Activated CD4-positive, alpha-beta T cell treated with anti-CD3 and anti-CD28 coated beads for 36 hours (primary cell): ENCODE measurements at regions of chr16 and their contacts with region 1.

Region 1: GRCh38 chr16:30472328-30472942 is at the start of gene ITGAL:
- DNase-seq: peak; percentile 93
- ATAC-seq: peak; percentile 62
- H3K4me3 Mint-ChIP-seq: peak within 1 kb of the TSS; percentile 95
- H3K27ac Mint-ChIP-seq: peak within 1 kb of the TSS; percentile 99
- H3K4me1 Mint-ChIP-seq: peaks cover 63% of the 10 kb centered on the region
- H3K27me3 Mint-ChIP-seq: no peaks in the 10 kb centered on the region
- total RNA-seq, gene ITGAL: 210 to 222 TPM

Region 2: DNA sequence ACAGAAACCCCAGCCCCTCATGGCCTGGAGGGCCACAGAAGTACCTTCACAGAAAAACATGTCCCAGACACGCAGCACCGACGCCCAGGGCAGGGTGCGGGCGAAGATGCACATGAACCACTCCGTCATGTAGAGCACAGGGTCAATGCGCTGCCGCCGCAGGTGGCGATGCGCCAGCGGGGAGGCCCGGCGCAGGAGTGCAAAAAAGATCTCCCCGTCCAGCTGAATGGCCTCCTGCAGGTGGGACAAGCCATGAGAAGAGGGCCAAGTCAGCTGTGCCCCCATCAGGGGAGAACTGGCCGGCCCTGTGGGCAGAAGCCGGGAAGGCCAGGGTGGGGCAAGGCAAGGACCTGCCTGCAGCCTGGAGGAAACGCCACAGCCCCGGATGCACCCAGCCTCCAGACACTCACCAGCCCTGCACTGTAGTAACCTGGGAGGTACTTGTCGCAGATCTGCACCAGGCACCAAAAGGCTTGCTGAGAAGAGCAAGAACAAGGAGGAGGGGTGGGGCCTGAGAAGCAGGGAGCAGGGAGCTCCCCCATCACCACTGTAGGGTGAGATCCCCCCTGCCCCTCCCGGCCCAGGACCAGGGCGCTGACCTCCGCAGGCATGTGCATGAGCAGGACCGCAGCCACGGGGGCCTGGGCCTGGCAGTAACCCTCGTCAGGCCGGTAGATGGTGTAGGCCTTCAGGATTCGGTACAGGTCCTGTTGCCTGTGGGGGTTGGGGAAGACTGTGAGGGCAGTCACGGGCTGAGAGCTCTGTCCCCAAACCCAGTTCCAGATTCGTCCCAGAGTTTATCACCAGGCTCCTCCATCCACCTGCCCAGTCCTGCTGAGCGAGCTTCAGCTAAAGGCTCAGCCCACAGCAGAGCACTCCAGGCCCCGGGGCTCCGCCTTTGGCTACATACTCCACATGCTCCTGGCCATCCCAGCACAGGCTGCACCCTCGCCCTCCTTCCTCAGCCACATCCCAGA is 113.0 kb before region 1 on chr16:
- CTCF ChIA-PET with region 1: no interaction called
- POLR2A ChIA-PET with region 1: no interaction called
- intact Hi-C with region 1: no loop called
- DNase-seq: no peak
- ATAC-seq: no peak
- H3K4me3 Mint-ChIP-seq: no peak overlapping the region
- H3K27ac Mint-ChIP-seq: no peak overlapping the region
- H3K4me1 Mint-ChIP-seq: peaks cover 9% of the 10 kb centered on the region
- H3K27me3 Mint-ChIP-seq: no peaks in the 10 kb centered on the region

Region 3: DNA sequence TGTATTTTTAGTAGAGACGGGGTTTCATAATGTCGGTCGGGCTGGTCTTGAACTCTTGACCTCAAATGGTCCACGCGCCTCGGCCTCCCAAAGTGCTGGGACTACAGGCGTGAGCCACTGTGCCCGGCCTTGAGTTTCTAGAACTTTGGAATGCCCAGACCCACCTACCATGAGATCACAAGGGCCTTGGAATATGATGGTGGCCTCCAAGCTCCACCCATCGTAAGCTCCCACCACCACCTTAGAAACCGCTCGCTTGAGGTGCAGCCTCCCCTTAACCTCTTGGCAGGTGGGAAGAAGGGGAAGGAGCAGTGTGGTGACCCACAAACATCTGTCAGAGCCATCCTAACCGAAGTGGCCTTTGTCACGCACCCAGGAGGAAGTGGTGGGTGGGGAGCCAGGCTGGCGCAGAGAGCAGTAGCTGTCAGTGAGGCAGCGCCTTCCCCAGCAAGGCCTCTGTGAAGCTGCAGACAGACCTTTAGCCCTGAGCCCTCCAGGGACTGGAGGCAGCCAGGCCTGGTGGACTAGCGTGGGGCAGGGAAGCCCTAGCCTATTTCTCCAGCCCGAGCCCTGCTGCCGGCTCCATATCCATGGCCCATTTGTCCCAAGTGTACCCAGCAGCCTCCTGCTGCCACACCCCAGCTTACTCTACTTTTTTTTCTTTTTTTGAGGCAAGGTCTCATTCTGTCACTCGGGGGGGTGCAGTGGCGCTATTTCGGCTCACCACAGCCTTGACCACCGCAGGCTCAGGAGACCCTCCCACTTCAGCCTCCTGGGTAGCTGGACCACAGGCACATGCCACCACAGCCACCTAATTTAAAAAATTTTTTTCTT is 13.7 kb before region 1 on chr16:
- CTCF ChIA-PET with region 1: interaction called, 25 read pairs
- POLR2A ChIA-PET with region 1: interaction called, 9 read pairs
- intact Hi-C with region 1: loop called (anchors 1 kb)
- DNase-seq: peak; percentile 94
- ATAC-seq: peak; percentile 96
- H3K4me3 Mint-ChIP-seq: peak overlapping the region; percentile 57
- H3K27ac Mint-ChIP-seq: peak overlapping the region; percentile 95
- H3K4me1 Mint-ChIP-seq: peaks cover 59% of the 10 kb centered on the region
- H3K27me3 Mint-ChIP-seq: no peaks in the 10 kb centered on the region

Region 4: DNA sequence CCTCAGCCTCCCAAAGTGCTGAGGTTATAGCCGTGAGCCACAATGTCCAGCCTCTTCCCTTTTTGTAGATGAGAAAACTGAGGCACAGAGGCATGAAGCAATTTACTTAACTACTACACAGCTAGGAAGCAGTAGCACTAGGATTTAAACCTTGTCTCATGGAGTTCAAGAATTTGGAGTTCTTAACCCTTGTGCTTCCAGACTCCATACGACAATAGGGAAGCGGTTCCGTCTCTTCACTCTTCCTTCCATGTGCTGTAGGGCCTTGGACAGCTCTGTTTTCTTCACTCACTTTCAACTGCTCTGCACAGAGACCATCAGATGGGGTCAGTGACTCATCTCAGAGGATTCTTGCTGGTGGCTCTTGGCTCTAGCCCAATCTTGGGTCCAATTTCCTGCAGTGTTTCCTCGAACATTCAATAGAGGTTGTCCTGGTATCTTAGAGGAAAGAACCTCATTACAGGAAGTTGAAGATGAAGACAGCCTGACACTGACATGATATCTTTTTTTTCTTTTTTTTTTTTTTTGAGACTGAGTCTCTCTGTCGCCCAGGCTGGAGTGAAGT is 19.4 kb after region 1 on chr16:
- CTCF ChIA-PET with region 1: interaction called, 4 read pairs
- POLR2A ChIA-PET with region 1: interaction called, 6 read pairs
- intact Hi-C with region 1: loop called in 1 of 2 experiments (anchors 2 kb)
- DNase-seq: peak; percentile 24
- ATAC-seq: peak; percentile 65
- H3K4me3 Mint-ChIP-seq: no peak overlapping the region
- H3K27ac Mint-ChIP-seq: peak overlapping the region; percentile 66
- H3K4me1 Mint-ChIP-seq: peaks cover 25% of the 10 kb centered on the region
- H3K27me3 Mint-ChIP-seq: no peaks in the 10 kb centered on the region

Region 5: GRCh38 chr16:30515275-30515674 is 42.8 kb after region 1 on chr16:
- CTCF ChIA-PET with region 1: no interaction called
- POLR2A ChIA-PET with region 1: no interaction called
- intact Hi-C with region 1: no loop called
- DNase-seq: no peak
- ATAC-seq: no peak
- H3K4me3 Mint-ChIP-seq: no peak overlapping the region
- H3K27ac Mint-ChIP-seq: no peak overlapping the region
- H3K4me1 Mint-ChIP-seq: no peaks in the 10 kb centered on the region
- H3K27me3 Mint-ChIP-seq: no peaks in the 10 kb centered on the region

Region 6: DNA sequence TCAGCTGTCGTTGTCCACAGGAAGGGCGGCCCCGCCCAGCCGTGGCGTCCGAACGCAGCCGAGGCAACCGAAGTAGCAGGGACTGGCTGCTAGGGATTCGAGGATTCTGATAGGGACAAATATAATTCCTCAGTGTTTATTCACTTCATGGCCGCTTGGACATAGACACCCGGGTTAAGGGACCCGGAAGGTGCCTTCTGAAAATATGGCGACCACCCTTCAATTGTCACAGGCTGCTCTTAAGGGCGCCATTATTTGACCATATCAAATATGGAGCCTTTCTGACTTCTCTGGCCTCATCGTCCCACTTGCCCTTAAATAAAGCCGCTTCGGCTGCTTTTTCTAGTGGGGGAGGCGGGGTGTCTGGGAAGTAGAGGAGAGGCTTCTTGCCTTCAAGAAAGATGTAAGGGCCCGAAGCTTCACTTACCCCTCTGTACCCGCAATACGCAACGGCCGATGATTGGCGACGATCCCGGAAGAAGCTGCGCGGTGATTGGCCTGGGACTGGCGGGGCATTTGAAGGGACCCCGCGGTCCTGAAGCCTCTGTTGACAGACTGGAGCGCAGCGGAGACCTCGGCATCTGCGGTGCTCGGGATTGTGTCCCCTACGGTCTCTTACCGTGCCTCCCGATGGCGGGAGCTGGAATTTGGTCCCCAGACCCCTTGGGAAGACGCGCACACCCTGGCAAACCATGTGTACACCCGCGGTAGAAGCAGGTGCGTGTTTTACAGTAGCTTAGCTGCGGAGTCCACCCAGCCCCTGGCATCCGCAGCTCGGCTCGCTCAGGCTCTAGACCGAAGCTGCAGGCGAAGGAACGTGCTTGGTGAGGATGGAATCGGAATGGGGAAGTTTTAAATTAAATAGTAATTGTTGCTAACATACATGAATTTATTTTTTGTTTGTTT is 99.5 kb after region 1 on chr16 and contains the start of gene ZNF688:
- CTCF ChIA-PET with region 1: interaction called, 3 read pairs
- POLR2A ChIA-PET with region 1: interaction called, 4 read pairs
- intact Hi-C with region 1: loop called (anchors 1 to 5 kb)
- DNase-seq: peak; percentile 95
- ATAC-seq: peak; percentile 79
- H3K4me3 Mint-ChIP-seq: peak within 1 kb of the TSS; percentile 87
- H3K27ac Mint-ChIP-seq: peak within 1 kb of the TSS; percentile 93
- H3K4me1 Mint-ChIP-seq: peaks cover 57% of the 10 kb centered on the region
- H3K27me3 Mint-ChIP-seq: no peaks in the 10 kb centered on the region
- total RNA-seq, gene ZNF688: 7.1 to 9.1 TPM